Naive thymus-derived CD4-positive, alpha-beta T cell (primary cell): ENCODE measurements at regions of chr18 and their contacts with region 1.

Region 1: DNA sequence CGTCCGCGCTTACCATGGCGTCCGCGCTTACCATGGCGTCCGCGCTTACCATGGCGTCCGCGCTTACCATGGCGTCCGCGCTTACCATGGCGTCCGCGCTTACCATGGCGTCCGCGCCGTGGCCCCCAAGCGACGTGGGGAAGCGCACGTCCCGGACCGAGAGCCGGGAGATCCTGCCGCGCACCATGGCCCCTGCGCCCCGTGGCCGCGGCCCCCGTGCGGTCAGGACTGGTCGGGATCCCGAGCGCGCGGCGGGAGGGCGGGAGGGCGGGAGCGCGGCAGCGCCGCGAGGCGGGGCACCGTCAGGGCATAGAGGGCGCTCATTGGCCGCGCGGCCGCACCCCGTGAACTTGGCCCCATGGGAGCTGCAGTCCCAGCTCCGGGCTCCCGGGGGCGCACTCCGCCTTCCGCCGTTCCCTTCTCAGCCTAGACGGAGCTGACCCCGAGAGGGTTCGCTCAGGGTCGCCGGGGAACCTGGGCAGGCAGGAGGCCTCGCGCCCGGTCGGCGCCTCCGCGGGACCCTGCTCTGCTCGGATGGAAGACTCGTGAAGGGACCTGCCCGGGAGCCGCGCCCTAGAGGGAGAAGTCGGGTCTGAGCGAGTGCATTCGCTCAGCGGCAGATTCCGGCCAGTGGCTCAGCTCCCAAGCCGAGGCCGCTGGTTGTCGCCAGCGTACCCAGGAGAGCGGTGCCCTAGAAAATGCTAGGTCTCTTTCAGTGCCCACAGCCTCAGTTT is at the start of gene ENOSF1:
- DNase-seq: peak; percentile 68 to 93 (median 80)
- ATAC-seq: peak; percentile 94
- H3K4me3 ChIP-seq: peak within 1 kb of the TSS; percentile 95
- H3K4me3 Mint-ChIP-seq: peak within 1 kb of the TSS; percentile 84 to 98 (median 92)
- H3K27ac ChIP-seq: peak within 1 kb of the TSS; percentile 76
- H3K27ac Mint-ChIP-seq: peak within 1 kb of the TSS; percentile 88 to 99 (median 98)
- H3K4me1 ChIP-seq: peaks cover 8 to 12% of the 10 kb centered on the region in 2 donors
- H3K4me1 Mint-ChIP-seq: peaks cover 20 to 39% (median 36%) of the 10 kb centered on the region in 7 donors
- H3K27me3 ChIP-seq: no peaks in the 10 kb centered on the region
- H3K27me3 Mint-ChIP-seq: no peaks in the 10 kb centered on the region
- total RNA-seq, gene ENOSF1: 80.1 to 137 (median 90.0) TPM

Region 2: GRCh38 chr18:158128-159036 is 554.2 kb before region 1 on chr18 and contains the start of gene USP14:
- CTCF ChIA-PET with region 1: no interaction called
- POLR2A ChIA-PET with region 1: no interaction called
- intact Hi-C with region 1: loop called (anchors 1 to 5 kb)
- DNase-seq: peak; percentile 83 to 97 (median 95)
- ATAC-seq: peak; percentile 97
- H3K4me3 ChIP-seq: peak within 1 kb of the TSS; percentile 38
- H3K4me3 Mint-ChIP-seq: peak within 1 kb of the TSS; percentile 85 to 99 (median 96)
- H3K27ac ChIP-seq: peak within 1 kb of the TSS; percentile 84
- H3K27ac Mint-ChIP-seq: peak within 1 kb of the TSS; percentile 80 to 98 (median 95)
- H3K4me1 ChIP-seq: peaks cover 4 to 15% of the 10 kb centered on the region in 2 donors
- H3K4me1 Mint-ChIP-seq: peaks cover 21 to 50% (median 35%) of the 10 kb centered on the region in 7 donors
- H3K27me3 ChIP-seq: no peaks in the 10 kb centered on the region
- H3K27me3 Mint-ChIP-seq: no peaks in the 10 kb centered on the region
- total RNA-seq, gene USP14: 39.2 to 70.6 (median 43.5) TPM

Region 3: GRCh38 chr18:623761-624620 is 88.6 kb before region 1 on chr18:
- CTCF ChIA-PET with region 1: interaction called, 6 read pairs
- POLR2A ChIA-PET with region 1: no interaction called
- intact Hi-C with region 1: loop called (anchors 1 kb)
- DNase-seq: peak; percentile 10 to 59 (median 37)
- ATAC-seq: peak; percentile 78
- H3K4me3 ChIP-seq: no peak overlapping the region
- H3K4me3 Mint-ChIP-seq: no peak overlapping the region
- H3K27ac ChIP-seq: no peak overlapping the region
- H3K27ac Mint-ChIP-seq: no peak overlapping the region
- H3K4me1 ChIP-seq: no peaks in the 10 kb centered on the region
- H3K4me1 Mint-ChIP-seq: peaks cover 0 to 2% (median 0%) of the 10 kb centered on the region in 7 donors
- H3K27me3 ChIP-seq: no peaks in the 10 kb centered on the region
- H3K27me3 Mint-ChIP-seq: peaks cover 0 to 48% (median 5%) of the 10 kb centered on the region in 5 donors

Region 4: GRCh38 chr18:650428-650858 is 62.1 kb before region 1 on chr18:
- CTCF ChIA-PET with region 1: no interaction called
- POLR2A ChIA-PET with region 1: no interaction called
- intact Hi-C with region 1: no loop called
- DNase-seq: peak in 1 of 9 donors; percentile 20
- ATAC-seq: peak; percentile 61
- H3K4me3 ChIP-seq: no peak overlapping the region
- H3K4me3 Mint-ChIP-seq: peak overlapping the region in 5 of 10 donors; percentile 10 to 79 (median 30)
- H3K27ac ChIP-seq: no peak overlapping the region
- H3K27ac Mint-ChIP-seq: peak overlapping the region in 2 of 9 donors; percentile 82
- H3K4me1 ChIP-seq: no peaks in the 10 kb centered on the region
- H3K4me1 Mint-ChIP-seq: peaks cover 3 to 14% (median 6%) of the 10 kb centered on the region in 7 donors
- H3K27me3 ChIP-seq: no peaks in the 10 kb centered on the region
- H3K27me3 Mint-ChIP-seq: peaks cover 0 to 25% (median 19%) of the 10 kb centered on the region in 5 donors

Region 5: GRCh38 chr18:697800-698199 is 14.8 kb before region 1 on chr18:
- CTCF ChIA-PET with region 1: no interaction called
- POLR2A ChIA-PET with region 1: interaction called, 4 read pairs
- intact Hi-C with region 1: loop called in 1 of 2 experiments (anchors 2 kb)
- DNase-seq: no peak
- ATAC-seq: no peak
- H3K4me3 ChIP-seq: no peak overlapping the region
- H3K4me3 Mint-ChIP-seq: no peak overlapping the region
- H3K27ac ChIP-seq: no peak overlapping the region
- H3K27ac Mint-ChIP-seq: peak overlapping the region in 2 of 9 donors; percentile 17 to 26
- H3K4me1 ChIP-seq: no peaks in the 10 kb centered on the region
- H3K4me1 Mint-ChIP-seq: peaks cover 2 to 13% (median 9%) of the 10 kb centered on the region in 7 donors
- H3K27me3 ChIP-seq: no peaks in the 10 kb centered on the region
- H3K27me3 Mint-ChIP-seq: no peaks in the 10 kb centered on the region

Region 6: GRCh38 chr18:830315-830901 is 117.8 kb after region 1 on chr18:
- CTCF ChIA-PET with region 1: interaction called, 5 read pairs
- POLR2A ChIA-PET with region 1: interaction called, 12 read pairs
- intact Hi-C with region 1: loop called (anchors 1 kb)
- DNase-seq: peak in 7 of 9 donors; percentile 74 to 88 (median 85)
- ATAC-seq: peak; percentile 89
- H3K4me3 ChIP-seq: peak overlapping the region; percentile 6
- H3K4me3 Mint-ChIP-seq: peak overlapping the region; percentile 44 to 77 (median 66)
- H3K27ac ChIP-seq: peak overlapping the region; percentile 54
- H3K27ac Mint-ChIP-seq: peak overlapping the region; percentile 32 to 91 (median 77)
- H3K4me1 ChIP-seq: peaks cover 15 to 22% of the 10 kb centered on the region in 2 donors
- H3K4me1 Mint-ChIP-seq: peaks cover 10 to 40% (median 36%) of the 10 kb centered on the region in 7 donors
- H3K27me3 ChIP-seq: no peaks in the 10 kb centered on the region
- H3K27me3 Mint-ChIP-seq: peaks cover 0 to 11% (median 0%) of the 10 kb centered on the region in 5 donors

Region 7: DNA sequence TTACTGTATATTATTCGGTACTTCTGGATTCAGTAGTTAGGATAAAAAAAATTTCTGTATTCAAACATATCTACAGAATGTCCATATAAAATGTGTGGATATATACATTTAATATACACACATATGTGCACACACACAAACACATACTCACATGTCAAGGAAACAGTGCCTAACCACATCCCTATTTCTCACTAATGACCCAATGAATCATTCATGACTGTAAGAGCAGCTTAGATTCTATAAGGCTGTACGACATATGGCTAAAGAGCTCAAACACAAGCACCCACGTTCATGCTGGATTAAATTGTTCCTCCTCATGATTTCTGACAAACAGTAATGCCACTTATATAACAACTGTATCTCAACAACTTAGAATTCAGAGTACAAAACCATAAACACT is 649.4 kb after region 1 on chr18:
- CTCF ChIA-PET with region 1: no interaction called
- POLR2A ChIA-PET with region 1: no interaction called
- intact Hi-C with region 1: no loop called
- DNase-seq: no peak
- ATAC-seq: no peak
- H3K4me3 ChIP-seq: no peak overlapping the region
- H3K4me3 Mint-ChIP-seq: no peak overlapping the region
- H3K27ac ChIP-seq: no peak overlapping the region
- H3K27ac Mint-ChIP-seq: no peak overlapping the region
- H3K4me1 ChIP-seq: no peaks in the 10 kb centered on the region
- H3K4me1 Mint-ChIP-seq: no peaks in the 10 kb centered on the region
- H3K27me3 ChIP-seq: no peaks in the 10 kb centered on the region
- H3K27me3 Mint-ChIP-seq: no peaks in the 10 kb centered on the region